ENCODE measurements at regions of chr4 and their contacts with region 1.

Region 1: GRCh38 chr4:98658287-98659105 is at the start of gene TSPAN5:
- DNase-seq: peak; percentile 80
- H3K4me3 Mint-ChIP-seq: peak within 1 kb of the TSS; percentile 96
- H3K27ac Mint-ChIP-seq: peak within 1 kb of the TSS; percentile 95
- H3K4me1 Mint-ChIP-seq: peaks cover 82% of the 10 kb centered on the region
- H3K27me3 Mint-ChIP-seq: no peaks in the 10 kb centered on the region
- total RNA-seq, gene TSPAN5: 34.1 and 35.5 TPM in 2 replicates

Region 2: DNA sequence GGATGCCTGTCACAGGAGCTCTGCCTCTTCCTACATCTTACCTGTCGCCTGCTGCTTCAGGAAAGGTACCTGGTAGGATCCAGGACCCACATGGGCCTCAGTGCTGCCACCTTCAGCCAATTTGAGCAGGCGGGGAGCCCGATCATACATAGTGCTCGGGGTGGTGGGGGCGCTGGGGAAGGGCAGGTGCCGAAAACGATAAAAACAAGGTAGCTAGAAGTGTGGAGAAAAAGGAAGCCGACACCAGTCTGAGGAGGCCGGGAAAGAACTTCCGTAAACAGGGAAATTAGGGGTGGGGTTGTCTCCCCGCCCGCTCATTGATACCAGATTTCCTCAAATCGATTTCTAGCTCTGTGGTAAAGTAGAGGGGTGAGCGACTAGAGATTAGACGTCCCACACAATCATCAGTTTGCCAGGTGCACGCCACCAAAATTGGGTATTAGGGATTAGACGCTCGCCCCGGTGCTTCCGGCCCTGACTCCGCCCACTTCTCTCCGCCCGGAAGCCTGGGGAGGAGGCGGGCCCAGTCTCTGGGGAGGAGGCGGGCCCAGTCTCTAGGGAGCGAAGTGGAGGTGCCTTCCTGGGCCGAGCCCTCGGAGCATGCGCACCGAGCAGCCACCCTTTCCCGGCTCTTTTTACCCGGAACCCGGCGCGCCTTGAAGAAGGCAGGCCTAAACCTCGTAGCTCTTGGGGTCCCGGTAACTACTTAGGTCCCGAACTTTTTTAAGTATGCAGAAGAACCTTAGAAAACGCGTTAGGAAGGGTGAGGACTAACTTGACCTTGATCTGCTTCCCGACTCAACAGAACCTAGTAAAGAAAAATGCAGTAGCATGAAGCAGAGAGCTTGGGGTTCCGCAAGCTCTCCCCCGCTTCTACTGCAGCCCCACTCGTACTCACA is 515.2 kb before region 1 on chr4 and contains the start of gene STPG2:
- intact Hi-C with region 1: loop called (anchors 1 kb)
- DNase-seq: peak; percentile 91
- H3K4me3 Mint-ChIP-seq: peak within 1 kb of the TSS; percentile 88
- H3K27ac Mint-ChIP-seq: peak within 1 kb of the TSS; percentile 93
- H3K4me1 Mint-ChIP-seq: peaks cover 18% of the 10 kb centered on the region
- H3K27me3 Mint-ChIP-seq: peaks cover 7% of the 10 kb centered on the region
- total RNA-seq, gene STPG2: not detected in 2 replicates

Region 3: DNA sequence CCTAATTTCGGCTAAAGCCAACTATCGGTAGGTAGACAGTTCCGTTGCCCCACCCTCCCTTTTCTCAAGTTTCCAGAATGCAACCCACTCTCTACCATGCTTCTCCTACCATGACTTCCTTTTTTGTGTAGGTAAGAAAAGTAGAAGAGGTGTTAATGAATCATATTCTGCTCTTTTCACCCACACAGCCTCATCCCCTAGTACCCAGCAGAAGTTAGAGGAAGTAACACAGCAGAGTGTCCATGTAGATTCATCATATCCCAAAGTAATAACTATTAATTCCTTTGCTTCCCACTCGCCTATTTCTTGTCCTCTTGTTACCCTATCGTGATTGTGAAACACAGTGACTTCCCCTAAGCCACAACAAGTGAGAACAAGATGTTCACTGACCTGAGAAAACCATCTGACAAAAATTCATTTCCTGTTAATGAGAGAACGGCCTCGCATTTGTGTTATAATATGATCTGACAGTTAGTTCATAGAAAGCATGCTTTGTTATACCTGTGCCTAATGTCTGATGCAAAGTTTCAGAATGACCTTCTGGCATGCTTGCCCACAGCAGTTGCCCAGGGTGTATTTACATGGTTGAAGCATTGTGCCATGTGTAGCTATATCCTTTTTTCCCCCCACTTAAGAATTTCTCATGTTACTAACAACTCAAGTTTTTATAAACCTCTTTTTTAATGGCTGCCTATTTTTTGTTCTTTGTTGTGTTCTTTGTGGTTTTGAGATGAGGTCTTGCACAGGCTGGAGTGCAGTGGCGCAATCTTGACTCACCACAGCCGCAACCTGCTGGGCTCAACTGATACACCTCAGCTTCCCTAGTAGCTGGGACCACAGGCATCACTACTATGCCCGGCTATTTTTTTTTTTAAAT is 211.8 kb before region 1 on chr4:
- intact Hi-C with region 1: loop called (anchors 1 kb)
- DNase-seq: peak; percentile 44
- H3K4me3 Mint-ChIP-seq: peak overlapping the region; percentile 67
- H3K27ac Mint-ChIP-seq: peak overlapping the region; percentile 90
- H3K4me1 Mint-ChIP-seq: peaks cover 43% of the 10 kb centered on the region
- H3K27me3 Mint-ChIP-seq: peaks cover 3% of the 10 kb centered on the region

Region 4: DNA sequence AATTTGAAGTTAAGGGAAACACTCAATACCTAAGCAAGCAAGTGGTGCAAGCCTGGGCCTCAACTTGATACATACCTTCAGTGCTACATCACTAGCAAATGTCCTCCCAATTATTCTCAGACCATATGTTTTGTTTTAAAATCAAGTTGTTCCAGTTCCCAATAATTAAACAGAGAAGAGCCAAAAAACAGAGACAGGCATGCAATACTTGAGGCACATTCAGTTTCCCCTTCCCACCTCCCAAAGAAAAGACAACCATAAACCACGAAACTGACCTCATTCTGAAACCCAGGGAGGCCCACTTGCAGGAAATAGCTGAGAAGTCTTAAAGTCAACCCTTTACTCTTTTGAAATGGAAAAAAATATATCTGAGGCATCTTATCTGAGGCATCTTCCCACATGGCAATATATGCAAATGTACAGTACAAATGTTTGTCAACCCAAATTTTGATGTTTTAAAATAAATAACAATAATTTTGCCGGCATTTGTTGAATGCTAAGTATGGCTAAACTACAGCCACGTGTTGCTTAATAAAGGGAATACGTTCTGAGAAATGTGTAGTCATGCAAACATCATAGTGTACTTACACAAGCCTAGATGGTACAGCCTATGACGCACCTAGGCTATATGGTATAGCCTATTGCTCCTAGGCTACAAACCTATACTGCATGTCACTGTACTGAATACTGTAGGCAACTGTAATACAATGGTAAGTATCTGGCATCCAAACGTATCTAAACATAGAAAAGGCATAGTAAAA is 147.6 kb before region 1 on chr4:
- intact Hi-C with region 1: loop called (anchors 1 kb)
- DNase-seq: peak; percentile 34
- H3K4me3 Mint-ChIP-seq: peak overlapping the region; percentile 47
- H3K27ac Mint-ChIP-seq: peak overlapping the region; percentile 83
- H3K4me1 Mint-ChIP-seq: peaks cover 85% of the 10 kb centered on the region
- H3K27me3 Mint-ChIP-seq: no peaks in the 10 kb centered on the region

Region 5: DNA sequence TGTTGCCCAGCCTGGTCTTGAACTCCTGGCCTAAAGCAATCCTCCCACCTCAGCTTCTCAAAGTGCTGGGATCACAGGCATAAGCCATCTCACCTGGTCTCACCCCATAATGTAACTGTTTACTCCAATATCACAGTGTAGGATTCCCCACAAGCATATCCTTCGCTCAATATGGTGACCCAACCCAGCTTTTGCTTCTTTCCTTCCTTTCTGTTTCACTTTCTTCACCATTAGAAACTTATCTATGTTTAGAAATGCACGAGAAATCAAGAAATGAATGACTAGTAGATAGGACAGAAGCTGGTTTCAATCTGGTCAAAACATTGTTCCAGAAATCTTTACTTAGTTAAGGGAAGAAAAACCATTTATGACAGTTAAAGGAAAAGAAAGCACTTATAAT is 19.0 kb before region 1 on chr4:
- intact Hi-C with region 1: loop called (anchors 1 kb)
- DNase-seq: no peak
- H3K4me3 Mint-ChIP-seq: peak overlapping the region; percentile 79
- H3K27ac Mint-ChIP-seq: peak overlapping the region; percentile 90
- H3K4me1 Mint-ChIP-seq: peaks cover 58% of the 10 kb centered on the region
- H3K27me3 Mint-ChIP-seq: no peaks in the 10 kb centered on the region

Region 6: DNA sequence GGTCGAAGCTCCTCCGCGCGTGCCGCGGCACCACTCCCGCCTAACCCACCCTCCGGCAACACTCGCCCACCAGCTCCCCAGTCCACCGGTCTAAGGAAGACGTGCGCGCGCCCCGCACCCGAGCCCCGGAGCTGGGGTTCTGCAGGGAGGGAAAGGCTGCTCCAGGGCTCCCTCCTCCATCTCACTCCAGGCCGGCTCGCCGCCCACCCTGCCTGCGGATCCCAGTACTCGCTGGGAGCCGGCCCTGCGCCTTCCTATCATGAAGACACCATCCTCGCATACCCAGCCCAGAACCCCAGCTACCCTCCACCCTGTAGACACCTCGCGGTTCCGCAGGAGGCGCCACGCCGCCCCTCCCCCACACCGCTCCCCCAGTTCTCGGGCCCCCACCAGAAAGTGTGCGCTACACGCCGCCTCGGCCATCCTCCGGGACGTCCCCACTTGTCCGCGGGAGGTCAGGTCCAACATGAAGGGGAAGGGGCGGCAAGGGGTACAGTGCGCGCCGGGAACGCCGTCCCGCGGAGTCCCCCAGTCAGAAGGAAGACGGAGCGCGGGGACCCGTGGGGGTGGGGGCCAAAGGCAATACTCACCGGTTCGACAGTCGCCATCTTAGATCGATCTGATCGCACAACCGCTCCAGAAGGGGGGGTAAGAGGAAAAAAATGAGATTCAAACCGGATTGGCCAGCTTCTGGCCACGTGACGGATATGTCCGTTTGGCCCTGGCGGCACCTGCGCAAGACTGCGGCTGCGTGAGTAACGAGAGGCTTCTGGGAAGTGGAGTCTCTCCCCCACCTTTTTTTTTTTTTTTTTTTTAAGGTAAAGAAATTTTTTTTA is 270.2 kb after region 1 on chr4 and contains the start of gene EIF4E:
- intact Hi-C with region 1: loop called (anchors 1 kb)
- DNase-seq: peak; percentile 96
- H3K4me3 Mint-ChIP-seq: peak within 1 kb of the TSS; percentile 98
- H3K27ac Mint-ChIP-seq: peak within 1 kb of the TSS; percentile 100
- H3K4me1 Mint-ChIP-seq: peaks cover 46% of the 10 kb centered on the region
- H3K27me3 Mint-ChIP-seq: no peaks in the 10 kb centered on the region
- total RNA-seq, gene EIF4E: 137 and 147 TPM in 2 replicates

Region 7: GRCh38 chr4:99563310-99564186 is 905.1 kb after region 1 on chr4 and contains the start of gene TRMT10A:
- intact Hi-C with region 1: loop called (anchors 1 kb)
- DNase-seq: peak; percentile 92
- H3K4me3 Mint-ChIP-seq: peak within 1 kb of the TSS; percentile 89
- H3K27ac Mint-ChIP-seq: peak within 1 kb of the TSS; percentile 96
- H3K4me1 Mint-ChIP-seq: peaks cover 25% of the 10 kb centered on the region
- H3K27me3 Mint-ChIP-seq: peaks cover 11% of the 10 kb centered on the region
- total RNA-seq, gene TRMT10A: 7.3 TPM in 2 replicates